Mammary epithelial cell (primary cell): ENCODE measurements at regions of chr10 and their contacts with region 1.

Region 1: GRCh38 chr10:50788951-50789945 is 49.5 kb downstream of the ASAH2B start:
- DNase-seq: peak; percentile 21
- H3K4me3 ChIP-seq: no peak overlapping the region
- H3K27ac ChIP-seq: no peak overlapping the region
- H3K4me1 ChIP-seq: no peaks in the 10 kb centered on the region
- H3K27me3 ChIP-seq: no peaks in the 10 kb centered on the region
- CTCF ChIP-seq: peak; percentile 57 to 68

Region 2: GRCh38 chr10:50807851-50808776 is 18.9 kb after region 1 on chr10:
- CTCF ChIA-PET with region 1: no interaction called
- dilution Hi-C with region 1: no loop called
- in situ Hi-C with region 1: no loop called
- intact Hi-C with region 1: no loop called
- DNase-seq: no peak
- H3K4me3 ChIP-seq: no peak overlapping the region
- H3K27ac ChIP-seq: no peak overlapping the region
- H3K4me1 ChIP-seq: no peaks in the 10 kb centered on the region
- H3K27me3 ChIP-seq: peaks cover 3% of the 10 kb centered on the region
- CTCF ChIP-seq: no peak

Region 3: DNA sequence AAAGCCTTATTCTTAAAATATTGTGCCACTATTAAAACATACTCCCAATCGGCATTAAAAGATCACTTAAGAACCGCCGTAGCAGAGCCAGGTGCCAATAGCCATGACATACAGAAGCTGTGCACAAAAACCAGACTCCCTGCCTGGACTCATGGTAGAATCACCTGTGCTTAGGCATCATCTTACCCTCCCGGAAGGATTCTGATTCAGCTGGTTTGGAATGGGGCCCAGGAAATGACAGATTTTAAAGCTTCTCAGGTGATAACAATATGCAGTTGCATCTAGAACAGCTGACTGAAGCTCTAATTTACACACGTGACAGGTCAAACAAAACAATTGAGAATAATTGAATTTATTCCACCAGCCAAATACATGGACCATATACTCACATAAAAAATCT is 85.5 kb after region 1 on chr10:
- CTCF ChIA-PET with region 1: no interaction called
- dilution Hi-C with region 1: no loop called
- in situ Hi-C with region 1: loop called in 1 of 2 experiments (anchors 25 kb)
- intact Hi-C with region 1: no loop called
- DNase-seq: peak; percentile 23
- H3K4me3 ChIP-seq: no peak overlapping the region
- H3K27ac ChIP-seq: no peak overlapping the region
- H3K4me1 ChIP-seq: no peaks in the 10 kb centered on the region
- H3K27me3 ChIP-seq: no peaks in the 10 kb centered on the region
- CTCF ChIP-seq: no peak

Region 4: GRCh38 chr10:50896721-50897120 is 107.5 kb after region 1 on chr10:
- CTCF ChIA-PET with region 1: no interaction called
- dilution Hi-C with region 1: no loop called
- in situ Hi-C with region 1: loop called in 1 of 2 experiments (anchors 25 kb)
- intact Hi-C with region 1: loop called (anchors 1 kb)
- DNase-seq: no peak
- H3K4me3 ChIP-seq: no peak overlapping the region
- H3K27ac ChIP-seq: no peak overlapping the region
- H3K4me1 ChIP-seq: no peaks in the 10 kb centered on the region
- H3K27me3 ChIP-seq: no peaks in the 10 kb centered on the region
- CTCF ChIP-seq: no peak

Region 5: GRCh38 chr10:50988792-50989191 is 199.5 kb after region 1 on chr10:
- CTCF ChIA-PET with region 1: no interaction called
- dilution Hi-C with region 1: no loop called
- in situ Hi-C with region 1: no loop called
- intact Hi-C with region 1: loop called (anchors 1 kb)
- DNase-seq: no peak
- H3K4me3 ChIP-seq: no peak overlapping the region
- H3K27ac ChIP-seq: no peak overlapping the region
- H3K4me1 ChIP-seq: peaks cover 8% of the 10 kb centered on the region
- H3K27me3 ChIP-seq: peaks cover 15% of the 10 kb centered on the region
- CTCF ChIP-seq: peak; percentile 24 to 35

Region 6: GRCh38 chr10:51063659-51064535 is 274.6 kb after region 1 on chr10:
- CTCF ChIA-PET with region 1: interaction called, 6 read pairs
- dilution Hi-C with region 1: no loop called
- in situ Hi-C with region 1: no loop called
- intact Hi-C with region 1: loop called (anchors 5 kb)
- DNase-seq: peak; percentile 15
- H3K4me3 ChIP-seq: no peak overlapping the region
- H3K27ac ChIP-seq: no peak overlapping the region
- H3K4me1 ChIP-seq: no peaks in the 10 kb centered on the region
- H3K27me3 ChIP-seq: no peaks in the 10 kb centered on the region
- CTCF ChIP-seq: peak; percentile 56 to 61

Region 7: DNA sequence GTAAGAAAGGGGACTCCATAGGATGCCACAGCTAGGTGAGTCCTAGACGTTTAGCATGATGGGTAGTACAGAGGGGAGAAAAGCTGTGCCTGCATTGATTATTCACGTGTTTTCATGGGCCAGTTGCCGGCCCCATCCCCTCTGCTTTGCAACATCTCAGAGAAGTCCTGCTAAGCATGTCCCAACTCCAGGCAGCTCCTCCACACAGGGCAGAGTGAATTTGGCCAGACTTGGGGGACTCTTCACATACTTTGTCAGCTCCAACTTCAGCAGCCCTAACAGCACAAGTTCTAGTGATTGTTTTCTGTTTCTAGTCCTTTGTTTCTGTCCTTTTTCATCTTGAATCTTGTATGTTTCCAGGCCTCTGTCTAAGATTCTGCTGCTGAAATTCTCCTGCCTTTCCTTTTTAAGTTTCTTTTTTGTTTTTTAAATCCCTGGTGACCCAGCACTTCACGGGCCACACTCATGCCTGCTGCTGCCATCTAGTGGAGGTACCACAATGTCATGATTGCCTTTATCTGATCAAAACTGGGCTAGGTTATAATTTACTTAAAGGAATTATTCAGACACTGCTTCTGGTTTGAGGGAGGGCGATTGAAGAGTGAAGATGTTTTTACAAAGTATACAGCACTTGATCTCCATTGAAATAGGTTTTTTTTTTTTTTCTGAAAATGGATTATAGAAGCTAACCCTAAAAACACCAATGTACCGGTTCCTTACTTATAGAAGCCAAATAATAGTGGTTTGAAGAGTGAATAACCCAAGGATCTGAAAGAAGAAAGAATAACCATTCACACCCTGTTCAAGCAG is 633.3 kb after region 1 on chr10:
- CTCF ChIA-PET with region 1: no interaction called
- dilution Hi-C with region 1: no loop called
- in situ Hi-C with region 1: no loop called
- intact Hi-C with region 1: loop called (anchors 5 kb)
- DNase-seq: peak; percentile 14
- H3K4me3 ChIP-seq: no peak overlapping the region
- H3K27ac ChIP-seq: no peak overlapping the region
- H3K4me1 ChIP-seq: no peaks in the 10 kb centered on the region
- H3K27me3 ChIP-seq: no peaks in the 10 kb centered on the region
- CTCF ChIP-seq: peak; percentile 80 to 81